Left ventricle myocardium inferior (tissue), 1 donor: ENCODE measurements at regions of chr7 and their contacts with region 1.

Region 1: DNA sequence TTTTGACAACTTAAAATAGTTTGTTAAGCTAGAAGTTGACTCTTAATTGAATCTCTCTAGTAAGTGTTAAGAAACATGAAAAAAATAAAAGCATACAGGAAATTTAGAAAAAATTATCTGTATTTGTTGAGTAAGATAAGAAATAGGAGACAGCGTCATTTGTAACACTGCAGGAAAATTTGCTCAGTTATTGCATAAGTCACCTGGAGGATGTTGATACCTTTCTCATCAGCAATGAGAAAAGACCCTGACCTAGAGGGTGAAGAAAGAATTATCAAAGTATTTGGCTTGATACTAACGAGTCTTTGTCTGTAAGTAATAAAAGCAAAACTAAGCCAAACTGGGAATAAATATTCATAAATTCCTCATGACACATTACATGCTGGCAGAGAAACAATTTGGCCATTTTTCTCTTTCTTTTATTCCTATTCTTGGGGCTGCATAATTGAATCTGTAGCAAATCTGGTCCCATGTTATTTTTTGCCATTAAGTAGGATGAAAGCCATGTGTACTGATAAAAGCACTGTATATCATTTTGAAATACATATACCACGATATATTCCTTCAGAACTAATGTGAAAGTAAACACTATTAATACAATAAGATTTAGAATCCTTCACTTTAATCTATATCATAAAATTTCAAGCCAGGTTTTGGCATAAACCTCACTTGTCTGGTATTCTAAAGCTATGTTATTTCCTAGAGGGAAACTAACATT is 362.8 kb downstream of the THSD7A start:
- DNase-seq: no peak
- H3K4me3 ChIP-seq: no peak overlapping the region
- H3K27ac ChIP-seq: no peak overlapping the region
- H3K4me1 ChIP-seq: no peaks in the 10 kb centered on the region
- H3K27me3 ChIP-seq: no peaks in the 10 kb centered on the region
- CTCF ChIP-seq: no peak

Region 2: GRCh38 chr7:11831736-11832495 is 362.7 kb after region 1 on chr7 and contains the start of gene THSD7A:
- intact Hi-C with region 1: loop called (anchors 10 kb)
- DNase-seq: peak; percentile 42
- H3K4me3 ChIP-seq: peak within 1 kb of the TSS; percentile 72
- H3K27ac ChIP-seq: peak within 1 kb of the TSS; percentile 76
- H3K4me1 ChIP-seq: peaks cover 27% of the 10 kb centered on the region
- H3K27me3 ChIP-seq: peaks cover 7% of the 10 kb centered on the region
- CTCF ChIP-seq: no peak
- total RNA-seq, gene THSD7A: 1.6 TPM